ENCODE measurements at regions of chr22 and their contacts with region 1.

Region 1: DNA sequence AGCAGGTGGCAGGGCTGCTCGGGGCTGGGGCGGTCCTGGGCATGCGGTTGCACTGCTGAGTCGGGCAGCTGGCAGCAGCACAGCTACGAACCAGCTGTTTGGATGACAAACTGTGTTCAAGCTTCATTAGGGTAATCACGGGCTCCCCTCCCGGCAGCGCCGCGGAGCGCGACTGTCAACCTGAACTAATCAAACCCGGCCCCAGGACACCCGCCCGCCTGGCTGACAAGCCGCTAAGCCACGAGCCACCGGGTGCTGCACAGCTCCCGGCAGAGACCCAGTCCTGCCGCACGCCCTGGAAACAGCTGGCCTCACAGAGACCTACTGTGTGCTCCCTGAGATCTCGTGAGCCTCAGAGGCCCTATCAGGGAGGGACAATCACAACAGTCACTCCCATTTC is 60.6 kb upstream of the TCF20 start:
- DNase-seq: peak; percentile 77
- H3K4me3 ChIP-seq: no peak overlapping the region
- H3K27ac ChIP-seq: no peak overlapping the region
- H3K4me1 ChIP-seq: peaks cover 18% of the 10 kb centered on the region
- CTCF ChIP-seq: peak; percentile 57

Region 2: GRCh38 chr22:42296381-42296853 is 34.6 kb before region 1 on chr22:
- CTCF ChIA-PET with region 1: no interaction called
- POLR2A ChIA-PET with region 1: no interaction called
- intact Hi-C with region 1: loop called (anchors 2 kb)
- DNase-seq: peak; percentile 77
- H3K4me3 ChIP-seq: no peak overlapping the region
- H3K27ac ChIP-seq: peak overlapping the region; percentile 83
- H3K4me1 ChIP-seq: peaks cover 86% of the 10 kb centered on the region
- CTCF ChIP-seq: peak; percentile 83

Region 3: DNA sequence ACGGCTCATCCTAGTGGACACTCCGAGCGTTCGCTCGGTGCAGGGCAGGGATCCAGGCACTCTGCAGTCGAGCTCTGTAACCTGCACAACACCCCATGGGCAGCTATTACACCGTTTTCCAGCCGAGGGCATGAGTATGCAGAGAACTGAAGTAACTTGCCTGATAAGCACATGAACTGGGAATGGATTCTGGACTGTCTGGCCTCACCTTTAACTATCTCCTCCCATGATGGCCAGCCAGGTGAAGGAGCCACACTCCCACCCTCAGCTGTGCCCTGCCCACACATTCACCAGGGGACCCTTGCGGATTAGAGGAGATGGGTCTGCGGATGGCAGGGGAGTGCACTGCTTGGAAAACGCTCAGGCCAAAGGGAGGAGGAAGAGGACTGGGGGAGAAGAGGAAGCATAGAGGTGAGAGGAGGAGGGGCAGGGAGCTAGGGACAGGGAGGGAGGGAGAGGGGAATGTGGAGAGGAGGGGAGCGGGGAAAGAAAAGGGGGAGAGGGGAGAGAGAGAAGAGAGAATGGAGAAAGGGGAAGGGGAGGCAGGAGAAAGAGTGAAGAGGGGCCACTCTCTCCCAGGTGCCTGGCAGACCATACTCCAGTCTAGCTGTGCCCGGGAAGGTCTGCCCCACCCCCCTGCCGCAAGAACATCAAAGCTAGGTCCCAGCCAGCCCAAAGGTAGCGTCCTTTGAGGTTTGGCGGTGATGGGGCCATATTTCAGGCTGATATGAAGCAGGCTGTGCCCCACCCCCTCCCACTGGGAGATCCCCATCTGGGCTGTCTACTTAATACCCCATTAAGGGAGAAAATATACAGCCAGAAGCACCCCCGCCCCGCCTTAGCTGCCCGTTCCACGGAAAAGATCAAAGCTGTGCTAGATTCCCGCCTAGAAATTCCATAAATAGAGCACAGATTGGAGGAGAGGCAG is 27.4 kb before region 1 on chr22:
- CTCF ChIA-PET with region 1: no interaction called
- POLR2A ChIA-PET with region 1: no interaction called
- intact Hi-C with region 1: loop called (anchors 1 kb)
- DNase-seq: no peak
- H3K4me3 ChIP-seq: no peak overlapping the region
- H3K27ac ChIP-seq: no peak overlapping the region
- H3K4me1 ChIP-seq: peaks cover 45% of the 10 kb centered on the region
- CTCF ChIP-seq: no peak

Measured in OCI-LY7 (cell line).